Activated naive CD4-positive, alpha-beta T cell treated with anti-CD3 and anti-CD28 coated beads for 36 hours (primary cell): ENCODE measurements at regions of chr2 and their contacts with region 1.

Region 1: GRCh38 chr2:101308432-101309210 is at the start of gene RNF149:
- DNase-seq: peak; percentile 87
- H3K4me3 Mint-ChIP-seq: peak within 1 kb of the TSS; percentile 82
- H3K27ac Mint-ChIP-seq: peak within 1 kb of the TSS; percentile 88
- H3K4me1 Mint-ChIP-seq: peaks cover 62% of the 10 kb centered on the region
- H3K27me3 Mint-ChIP-seq: no peaks in the 10 kb centered on the region
- total RNA-seq, gene RNF149: 25.0 to 27.1 TPM

Region 2: GRCh38 chr2:100752628-100753333 is 555.8 kb before region 1 on chr2:
- CTCF ChIA-PET with region 1: no interaction called
- intact Hi-C with region 1: loop called (anchors 1 kb)
- DNase-seq: no peak
- H3K4me3 Mint-ChIP-seq: no peak overlapping the region
- H3K27ac Mint-ChIP-seq: peak overlapping the region; percentile 51
- H3K4me1 Mint-ChIP-seq: peaks cover 24% of the 10 kb centered on the region
- H3K27me3 Mint-ChIP-seq: peaks cover 2% of the 10 kb centered on the region

Region 3: GRCh38 chr2:101252408-101253012 is 56.1 kb before region 1 on chr2 and contains the start of gene CNOT11:
- CTCF ChIA-PET with region 1: no interaction called
- intact Hi-C with region 1: loop called (anchors 1 kb)
- DNase-seq: peak; percentile 99
- H3K4me3 Mint-ChIP-seq: peak within 1 kb of the TSS; percentile 98
- H3K27ac Mint-ChIP-seq: peak within 1 kb of the TSS; percentile 93
- H3K4me1 Mint-ChIP-seq: peaks cover 39% of the 10 kb centered on the region
- H3K27me3 Mint-ChIP-seq: no peaks in the 10 kb centered on the region
- total RNA-seq, gene CNOT11: 38.3 to 40.3 TPM

Region 4: DNA sequence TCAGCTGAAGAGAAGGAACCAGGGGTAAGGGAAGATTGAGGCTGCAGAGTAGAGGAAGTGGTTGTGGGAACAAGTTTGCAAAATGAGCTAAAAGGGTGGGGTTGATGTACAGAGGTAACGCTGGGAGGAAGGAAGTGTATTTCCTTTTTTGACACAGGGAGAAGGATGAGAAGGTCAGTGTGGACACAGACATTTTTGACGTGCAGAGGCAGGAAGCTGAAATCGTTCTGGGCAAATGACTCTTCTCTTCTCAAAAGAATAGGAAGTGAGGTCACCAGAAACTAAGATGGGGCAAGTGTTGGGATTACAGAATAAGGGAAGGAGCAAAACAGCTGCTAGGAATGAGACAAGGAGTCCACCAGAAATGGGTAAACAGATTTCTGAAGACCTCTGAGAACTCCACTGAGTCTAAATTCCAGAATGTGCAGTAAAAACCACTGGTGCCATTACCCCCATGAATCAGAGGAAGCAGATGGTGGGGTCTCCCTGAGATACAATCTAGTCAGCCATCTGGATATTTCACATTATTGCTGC is 19.9 kb after region 1 on chr2:
- CTCF ChIA-PET with region 1: interaction called, 3 read pairs
- intact Hi-C with region 1: loop called (anchors 1 kb)
- DNase-seq: peak; percentile 60
- H3K4me3 Mint-ChIP-seq: no peak overlapping the region
- H3K27ac Mint-ChIP-seq: no peak overlapping the region
- H3K4me1 Mint-ChIP-seq: peaks cover 18% of the 10 kb centered on the region
- H3K27me3 Mint-ChIP-seq: no peaks in the 10 kb centered on the region

Region 5: GRCh38 chr2:101736861-101737291 is 428.3 kb after region 1 on chr2:
- CTCF ChIA-PET with region 1: no interaction called
- intact Hi-C with region 1: loop called (anchors 2 kb)
- DNase-seq: peak; percentile 77
- H3K4me3 Mint-ChIP-seq: peak overlapping the region; percentile 8
- H3K27ac Mint-ChIP-seq: peak overlapping the region; percentile 89
- H3K4me1 Mint-ChIP-seq: peaks cover 90% of the 10 kb centered on the region
- H3K27me3 Mint-ChIP-seq: no peaks in the 10 kb centered on the region

Region 6: DNA sequence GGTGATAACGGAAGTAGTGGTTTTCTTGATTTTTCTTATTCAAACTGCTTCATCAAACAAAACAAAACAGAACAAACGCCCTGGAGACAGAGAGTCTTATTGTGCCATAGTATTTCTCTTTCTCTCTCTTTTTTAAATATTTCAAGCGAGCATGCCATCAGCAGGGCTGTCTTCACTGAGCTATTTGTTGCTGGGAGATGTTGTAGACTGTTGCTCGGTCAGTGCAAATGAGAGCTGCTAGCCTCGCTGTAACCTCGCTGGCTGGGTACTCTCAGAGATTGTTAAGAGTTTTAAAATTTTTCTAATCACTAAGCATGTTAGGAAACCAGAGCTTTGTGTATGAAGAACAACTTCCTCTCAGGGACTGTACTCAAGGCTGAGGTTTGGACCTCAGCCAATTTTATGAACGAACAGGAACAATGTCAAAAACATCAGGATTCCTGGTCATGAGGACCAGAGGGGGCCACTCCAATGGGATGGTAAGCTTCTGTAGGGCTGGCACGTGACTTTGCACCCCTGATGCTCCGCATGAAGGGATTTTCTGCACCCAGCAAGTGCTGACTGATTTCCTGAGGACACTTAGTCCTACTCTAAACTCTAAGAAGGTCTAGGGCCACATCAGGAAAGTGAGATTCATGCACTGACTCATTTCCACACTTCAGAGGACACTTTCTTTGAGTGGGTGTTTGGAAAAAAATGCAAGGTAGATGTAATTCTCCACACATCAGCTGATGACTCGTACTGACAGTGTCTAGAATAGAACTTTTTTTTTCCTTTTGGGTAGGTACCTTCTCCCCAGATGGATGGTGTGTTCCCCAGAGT is 774.2 kb after region 1 on chr2:
- CTCF ChIA-PET with region 1: no interaction called
- intact Hi-C with region 1: loop called (anchors 2 kb)
- DNase-seq: peak; percentile 79
- H3K4me3 Mint-ChIP-seq: peak overlapping the region; percentile 30
- H3K27ac Mint-ChIP-seq: peak overlapping the region; percentile 91
- H3K4me1 Mint-ChIP-seq: peaks cover 60% of the 10 kb centered on the region
- H3K27me3 Mint-ChIP-seq: no peaks in the 10 kb centered on the region

Region 7: DNA sequence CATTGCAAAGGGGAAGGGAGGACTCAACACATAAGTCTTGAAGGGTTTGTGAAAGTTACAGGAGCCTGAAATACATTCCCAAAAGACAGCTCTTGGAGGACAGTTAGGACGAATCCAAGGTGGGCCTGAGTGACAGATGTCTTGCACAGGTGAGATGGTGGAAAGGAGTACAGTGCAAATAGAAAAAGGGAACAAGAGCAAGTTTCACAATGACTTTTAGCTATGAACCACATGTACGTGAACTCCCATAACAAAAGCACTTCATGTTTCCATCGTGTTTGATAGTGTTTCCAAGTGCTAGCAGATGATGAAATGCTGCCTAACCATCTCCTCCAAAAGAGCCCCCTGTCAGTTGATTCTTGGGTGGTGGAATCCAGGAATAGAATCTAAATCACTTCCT is 1116.1 kb after region 1 on chr2:
- CTCF ChIA-PET with region 1: no interaction called
- intact Hi-C with region 1: loop called (anchors 10 kb)
- DNase-seq: no peak
- H3K4me3 Mint-ChIP-seq: no peak overlapping the region
- H3K27ac Mint-ChIP-seq: peak overlapping the region; percentile 4
- H3K4me1 Mint-ChIP-seq: peaks cover 78% of the 10 kb centered on the region
- H3K27me3 Mint-ChIP-seq: no peaks in the 10 kb centered on the region

Region 8: GRCh38 chr2:103103678-103104077 is 1795.1 kb after region 1 on chr2:
- CTCF ChIA-PET with region 1: no interaction called
- intact Hi-C with region 1: no loop called
- DNase-seq: no peak
- H3K4me3 Mint-ChIP-seq: no peak overlapping the region
- H3K27ac Mint-ChIP-seq: no peak overlapping the region
- H3K4me1 Mint-ChIP-seq: no peaks in the 10 kb centered on the region
- H3K27me3 Mint-ChIP-seq: no peaks in the 10 kb centered on the region